Motor neuron (in vitro differentiated cells): ENCODE measurements at regions of chr2 and their contacts with region 1.

Region 1: DNA sequence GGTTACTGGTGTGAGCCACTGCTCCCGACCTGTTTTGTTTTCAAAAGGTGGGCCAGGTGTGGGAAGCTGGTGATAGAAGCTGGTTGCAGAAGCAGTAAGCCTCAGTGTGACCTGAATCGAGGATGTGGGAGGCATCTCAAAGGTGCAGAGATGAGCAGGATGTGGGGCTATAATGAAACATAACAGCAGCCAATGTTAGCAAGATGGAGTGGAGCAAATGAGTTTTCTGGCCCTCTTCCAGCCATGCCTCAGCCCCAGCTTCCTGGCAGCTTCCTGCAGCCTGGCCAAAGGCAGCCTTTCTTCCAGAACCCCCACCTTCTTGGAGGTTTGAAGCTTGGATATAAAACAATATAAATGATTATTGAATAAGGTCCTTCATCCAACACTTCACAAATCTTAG is 184.8 kb downstream of the NCK2 start:
- ATAC-seq: peak in 1 of 8 experiments; percentile 50
- H3K4me3 ChIP-seq: no peak overlapping the region
- H3K27ac ChIP-seq: no peak overlapping the region
- H3K4me1 ChIP-seq: peaks cover 3 to 16% of the 10 kb centered on the region in 2 donors

Region 2: DNA sequence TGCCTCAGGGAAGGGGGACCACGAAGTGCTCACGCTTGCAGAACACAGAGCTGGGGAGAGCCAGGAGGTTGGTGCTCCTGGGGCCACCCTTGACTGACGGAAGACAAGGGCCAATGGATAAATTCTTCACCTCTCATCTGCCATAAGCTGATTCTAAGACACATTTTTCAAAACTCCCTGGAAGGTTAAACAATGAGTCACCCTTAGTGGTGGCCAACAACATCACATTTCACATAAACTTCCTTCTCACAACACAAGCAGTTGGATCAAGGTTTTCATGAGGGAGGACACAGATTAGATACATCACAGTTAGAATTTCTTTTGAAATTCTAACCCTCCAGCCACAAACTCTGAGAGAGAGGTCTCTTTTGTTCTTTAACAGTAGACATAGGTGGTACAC is 1789.2 kb before region 1 on chr2:
- in situ Hi-C with region 1: no loop called
- ATAC-seq: no peak
- H3K4me3 ChIP-seq: no peak overlapping the region
- H3K27ac ChIP-seq: no peak overlapping the region
- H3K4me1 ChIP-seq: peaks cover under 1 to 4% of the 10 kb centered on the region in 2 donors

Region 3: GRCh38 chr2:105288133-105288532 is 641.4 kb before region 1 on chr2:
- in situ Hi-C with region 1: no loop called
- ATAC-seq: no peak
- H3K4me3 ChIP-seq: no peak overlapping the region
- H3K27ac ChIP-seq: no peak overlapping the region
- H3K4me1 ChIP-seq: no peaks in the 10 kb centered on the region

Region 4: GRCh38 chr2:105299295-105299694 is 630.2 kb before region 1 on chr2:
- in situ Hi-C with region 1: no loop called
- ATAC-seq: no peak
- H3K4me3 ChIP-seq: no peak overlapping the region
- H3K27ac ChIP-seq: no peak overlapping the region
- H3K4me1 ChIP-seq: peaks cover 0 to 3% of the 10 kb centered on the region in 2 donors

Region 5: DNA sequence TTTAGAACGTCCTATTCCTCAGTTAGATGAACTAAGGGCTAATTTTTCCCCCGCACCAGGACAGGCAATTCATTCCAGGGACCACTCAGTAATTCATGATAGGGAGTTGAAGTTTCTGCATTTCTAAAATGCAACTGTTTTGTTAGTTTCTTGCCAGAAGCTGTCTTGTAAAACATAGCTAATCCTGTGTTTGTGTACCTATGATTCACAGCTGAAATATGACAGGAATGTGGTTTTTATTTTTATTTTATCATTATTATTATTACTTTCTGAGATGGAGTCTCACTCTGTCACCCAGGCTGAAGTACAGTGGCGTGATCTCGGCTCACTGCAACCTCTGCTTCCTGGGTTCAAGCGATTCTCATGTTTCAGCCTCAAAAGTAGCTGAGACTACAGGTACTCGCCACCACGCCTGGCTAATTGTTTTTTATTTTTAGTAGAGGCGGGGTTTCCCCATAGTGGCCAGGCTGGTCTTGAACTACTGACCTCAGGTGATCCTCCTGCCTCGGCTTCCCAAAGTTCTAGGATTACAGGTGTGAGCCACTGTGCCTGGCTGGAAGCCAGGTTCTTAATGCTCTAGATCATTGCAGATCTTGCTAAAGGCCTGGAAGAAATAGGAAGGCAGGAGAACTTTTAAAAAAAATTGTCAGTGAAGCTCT is 375.8 kb before region 1 on chr2:
- in situ Hi-C with region 1: loop called in 1 of 9 experiments (anchors 25 kb)
- ATAC-seq: peak in 1 of 8 experiments; percentile 31
- H3K4me3 ChIP-seq: no peak overlapping the region
- H3K27ac ChIP-seq: no peak overlapping the region
- H3K4me1 ChIP-seq: no peaks in the 10 kb centered on the region

Region 6: DNA sequence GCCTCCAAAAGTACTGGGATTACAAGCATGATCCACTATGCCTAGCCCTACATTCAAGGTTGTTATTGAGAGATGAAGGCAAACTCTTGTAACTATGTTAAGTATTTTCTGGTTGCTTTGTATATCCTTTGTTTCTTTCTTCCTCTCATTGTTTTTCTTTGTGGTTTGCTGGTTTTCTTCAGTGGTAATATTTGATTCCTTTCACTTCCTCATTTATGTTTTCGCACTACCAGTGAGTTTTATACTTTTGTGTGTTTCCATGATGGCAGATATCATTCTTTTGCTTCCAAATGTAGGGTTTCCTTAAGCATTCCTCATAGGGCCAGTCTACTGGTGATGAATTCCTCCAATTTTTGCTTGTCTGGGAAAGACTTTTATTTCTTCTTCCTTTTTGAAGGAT is 94.6 kb before region 1 on chr2:
- in situ Hi-C with region 1: loop called in 1 of 9 experiments (anchors 25 kb)
- ATAC-seq: no peak
- H3K4me3 ChIP-seq: no peak overlapping the region
- H3K27ac ChIP-seq: no peak overlapping the region
- H3K4me1 ChIP-seq: no peaks in the 10 kb centered on the region